Posterior cingulate gyrus (tissue), 11 donors: ENCODE measurements at regions of chr6 and their contacts with region 1.

Region 1: GRCh38 chr6:133715270-133715669 is 173.6 kb upstream of the TCF21 start:
- DNase-seq: no peak

Region 2: GRCh38 chr6:133730881-133731280 is 15.6 kb after region 1 on chr6:
- intact Hi-C with region 1: loop called (anchors 1 kb)
- DNase-seq: no peak

Region 3: DNA sequence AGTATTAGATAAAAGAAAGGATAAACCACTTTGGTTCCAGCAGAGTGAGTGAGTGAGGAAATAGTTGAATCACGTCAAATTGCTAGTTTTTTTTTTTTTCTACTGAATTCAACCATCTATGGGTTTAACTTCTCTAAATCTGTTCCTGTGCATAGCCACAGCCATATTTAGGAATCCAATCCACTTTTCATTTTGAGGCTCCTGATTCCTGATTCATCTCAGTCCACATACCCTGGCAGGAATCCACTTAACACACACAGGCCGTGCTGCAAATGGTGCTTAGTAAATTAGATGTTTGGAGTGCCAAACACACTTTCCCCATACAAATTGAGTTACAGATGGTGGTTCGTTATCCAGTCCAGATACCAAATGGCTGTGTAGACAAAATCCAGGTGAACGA is 1014.3 kb after region 1 on chr6:
- intact Hi-C with region 1: no loop called
- DNase-seq: peak in 1 of 10 donors; percentile 7